Left ventricle myocardium superior (tissue), 1 donor: ENCODE measurements at regions of chr5 and their contacts with region 1.

Region 1: DNA sequence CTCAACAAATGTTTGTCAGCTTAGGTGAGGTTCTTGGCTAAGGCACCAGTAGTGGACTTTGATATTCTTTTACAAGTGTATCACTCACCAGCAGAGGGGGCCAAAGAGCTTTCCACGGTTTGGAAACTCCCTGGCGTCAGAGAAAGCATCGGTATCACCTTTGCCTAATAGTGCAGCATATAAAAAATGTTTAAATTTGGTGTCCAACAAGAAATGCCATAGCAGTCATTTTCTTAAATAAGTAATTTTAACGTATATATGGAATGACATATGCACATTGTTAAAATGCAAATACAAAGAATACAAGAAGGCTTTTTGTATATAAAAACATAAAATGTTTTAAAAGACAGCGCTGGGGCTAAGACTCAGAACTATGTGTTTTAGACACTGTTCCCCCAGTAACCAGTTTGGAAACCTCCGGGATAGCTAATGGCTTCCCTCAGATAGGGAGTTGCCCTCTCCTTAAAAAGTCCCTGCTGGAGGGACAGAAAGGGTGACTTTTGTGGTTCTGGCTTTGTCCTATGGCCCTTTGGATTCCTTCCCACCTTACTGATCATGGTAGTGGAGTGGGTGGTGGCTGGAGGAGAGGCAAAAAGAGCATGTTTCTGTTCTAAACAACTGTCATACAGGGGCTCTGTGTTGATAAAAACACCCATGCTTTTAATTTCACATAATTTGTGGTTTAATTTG is 124.6 kb downstream of the GPBP1 start:
- DNase-seq: peak; percentile 58
- ATAC-seq: peak; percentile 95

Region 2: GRCh38 chr5:57499262-57500050 is 201.0 kb after region 1 on chr5:
- intact Hi-C with region 1: loop called (anchors 10 kb)
- DNase-seq: no peak
- ATAC-seq: peak; percentile 64

Region 3: DNA sequence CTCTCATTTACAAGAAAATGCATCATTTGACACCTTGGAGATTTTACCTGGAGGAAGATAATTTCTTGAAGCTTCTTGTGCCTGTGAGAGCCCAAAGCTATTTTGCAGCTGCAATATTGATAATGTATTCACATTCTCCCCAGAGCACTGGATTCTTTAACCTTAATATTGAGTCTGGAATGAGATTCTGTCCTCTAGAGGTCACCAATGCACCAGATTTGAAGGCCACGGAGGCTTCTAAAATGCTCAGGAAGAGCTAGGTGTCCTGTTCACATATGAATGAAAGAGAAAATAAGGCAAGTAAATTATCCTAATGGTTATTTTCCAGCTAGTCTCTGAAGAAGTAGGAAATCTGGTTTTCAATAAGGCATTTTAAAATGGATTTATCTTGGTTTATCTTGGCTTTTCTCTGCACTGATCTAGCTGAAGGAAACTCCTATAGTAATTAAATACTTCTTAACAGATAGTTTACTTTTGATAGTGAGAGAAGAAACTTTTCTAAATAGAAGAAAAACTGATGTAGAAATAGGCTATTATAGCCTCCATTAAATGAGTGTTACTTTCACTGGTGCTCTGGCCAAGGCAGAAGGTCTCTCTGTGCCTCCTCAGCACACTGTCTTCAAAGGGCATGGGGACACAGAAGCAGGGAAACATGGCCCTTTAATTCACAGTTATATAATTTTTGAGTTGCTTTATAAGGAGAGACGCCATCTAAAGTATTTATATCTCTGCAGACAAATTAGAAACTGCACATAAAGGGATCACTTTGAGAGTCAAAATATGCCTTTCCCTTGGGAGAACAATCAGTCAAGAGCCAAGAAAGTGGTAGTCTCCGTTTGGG is 481.2 kb after region 1 on chr5:
- intact Hi-C with region 1: loop called (anchors 10 kb)
- DNase-seq: no peak
- ATAC-seq: peak; percentile 87

Region 4: DNA sequence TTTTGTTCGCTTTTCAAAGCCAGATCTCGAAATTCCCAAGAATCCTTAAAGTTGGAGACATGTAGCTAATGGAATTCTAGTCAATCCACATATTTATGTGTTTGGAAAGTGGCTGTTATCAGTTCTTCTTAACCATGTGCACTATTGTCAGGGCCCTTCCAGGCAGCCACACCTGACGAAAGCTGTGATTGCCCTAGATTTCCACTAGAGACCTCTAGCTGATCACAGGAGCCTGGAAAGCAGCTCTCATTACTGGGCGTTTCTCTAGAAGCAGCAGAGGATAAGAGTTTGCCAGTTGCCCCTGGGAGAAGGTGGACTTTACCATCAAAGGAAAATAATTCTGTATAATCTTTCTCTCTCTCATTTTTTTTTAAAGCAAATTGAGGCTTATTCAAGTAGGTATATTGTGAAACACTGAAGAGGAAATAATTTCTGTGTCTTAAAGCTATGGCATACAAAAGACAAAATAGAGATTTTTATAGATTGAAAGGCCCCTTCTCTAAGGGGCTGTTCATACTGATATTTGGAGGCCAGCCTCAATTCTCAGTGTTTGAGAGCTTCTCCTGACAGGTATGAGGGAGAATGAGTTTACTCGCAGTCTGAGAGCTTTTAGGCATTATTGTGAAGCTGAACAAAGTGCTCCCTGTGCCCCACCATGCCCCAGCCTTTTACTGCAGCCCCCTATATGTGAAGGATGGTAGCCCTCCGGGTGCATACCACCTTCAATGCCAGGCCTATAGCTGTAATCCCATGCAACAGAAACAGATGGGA is 589.6 kb after region 1 on chr5:
- intact Hi-C with region 1: loop called (anchors 10 kb)
- DNase-seq: peak; percentile 30
- ATAC-seq: peak; percentile 95